ENCODE measurements at regions of chr9 and their contacts with region 1.

Region 1: DNA sequence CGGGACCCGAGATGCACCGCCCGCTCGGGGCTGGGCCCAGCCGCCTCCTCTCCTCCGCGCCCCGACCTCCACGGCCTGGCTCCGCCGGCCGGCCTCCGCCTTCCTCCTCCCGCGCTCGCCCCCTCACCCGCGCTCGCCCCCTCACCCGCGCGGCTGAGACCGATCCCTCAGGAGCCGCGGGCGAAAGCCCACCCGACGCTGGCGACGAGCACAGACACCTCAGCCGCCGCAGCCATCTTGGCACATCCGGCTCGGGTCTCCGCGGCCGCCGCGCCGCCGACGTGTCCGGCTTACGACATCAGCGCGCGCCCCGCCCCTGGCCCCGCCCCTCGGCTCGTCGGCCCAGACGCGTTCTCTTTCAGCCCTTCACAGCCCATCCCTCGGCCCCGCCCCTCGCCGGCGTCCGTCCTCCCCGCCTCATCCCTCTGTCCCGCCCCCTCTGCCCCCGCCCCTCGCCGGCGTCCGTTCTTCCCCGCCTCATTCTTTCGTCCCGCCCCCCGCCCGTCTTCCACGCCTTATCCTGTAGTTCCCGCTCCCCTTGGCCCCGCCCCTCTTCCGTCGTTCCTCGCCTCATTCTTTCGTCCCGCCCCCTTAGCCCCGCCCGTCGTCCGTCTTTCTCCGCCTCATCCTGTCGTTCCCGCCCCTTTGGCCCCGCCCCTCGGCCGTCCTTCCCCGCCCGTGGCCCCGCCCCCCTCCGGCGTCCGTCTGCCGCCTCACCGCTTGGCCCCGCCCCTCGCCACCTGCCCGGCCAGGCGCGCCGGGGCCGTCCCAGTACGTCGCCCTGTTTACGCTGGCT is at the start of gene SEC16A:
- DNase-seq: peak; percentile 97
- H3K4me3 ChIP-seq: peak within 1 kb of the TSS; percentile 84
- H3K27ac ChIP-seq: peak within 1 kb of the TSS; percentile 99
- H3K27me3 ChIP-seq: peaks cover 15% of the 10 kb centered on the region
- CTCF ChIP-seq: no peak
- polyA plus RNA-seq, gene SEC16A: 23.2 and 30.7 TPM in 2 replicates

Region 2: DNA sequence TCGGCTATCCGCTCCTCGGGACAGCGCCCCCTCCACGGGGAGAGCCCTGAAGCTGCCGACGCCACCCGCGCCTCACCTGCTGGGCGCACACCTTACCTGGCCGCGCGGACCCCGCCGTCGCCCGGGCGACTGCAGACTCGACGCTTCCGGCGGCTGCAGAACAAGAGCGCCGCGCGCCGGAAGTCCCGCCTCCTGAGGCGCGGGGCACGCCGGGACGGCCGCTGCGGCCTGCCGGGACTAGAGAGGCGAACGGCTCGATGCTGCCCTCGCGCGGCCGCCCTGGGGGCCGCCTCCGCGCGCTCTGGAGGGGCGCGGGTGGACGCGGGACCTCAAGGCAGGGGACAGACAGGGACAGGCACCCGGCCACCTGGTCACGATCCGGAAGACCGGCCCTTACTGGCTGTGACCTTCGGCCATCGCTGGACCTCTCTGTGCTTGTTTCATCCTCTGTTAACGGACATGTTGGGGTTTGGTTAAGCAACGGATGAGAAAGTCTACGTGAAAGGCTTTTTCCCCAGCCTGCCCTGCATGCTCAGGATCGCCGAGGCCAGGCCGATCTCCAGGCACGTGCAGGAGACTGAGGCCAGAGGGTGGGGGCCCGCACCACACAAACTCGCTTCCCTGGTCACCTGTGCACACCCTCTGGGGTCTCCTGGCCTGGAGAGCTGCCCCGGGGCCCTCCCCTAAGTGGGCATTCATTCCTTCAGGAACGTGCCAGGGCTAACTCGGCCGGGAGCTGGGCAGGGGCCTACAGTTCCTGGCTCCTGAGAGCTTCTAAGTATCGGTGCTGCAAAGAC is 82.8 kb before region 1 on chr9 and contains the start of gene SNAPC4:
- CTCF ChIA-PET with region 1: no interaction called
- POLR2A ChIA-PET with region 1: no interaction called
- DNase-seq: peak; percentile 34
- H3K4me3 ChIP-seq: peak within 1 kb of the TSS; percentile 86
- H3K27ac ChIP-seq: peak within 1 kb of the TSS; percentile 57
- H3K27me3 ChIP-seq: no peaks in the 10 kb centered on the region
- CTCF ChIP-seq: peak; percentile 68
- polyA plus RNA-seq, gene SNAPC4: 2.2 and 2.4 TPM in 2 replicates

Region 3: DNA sequence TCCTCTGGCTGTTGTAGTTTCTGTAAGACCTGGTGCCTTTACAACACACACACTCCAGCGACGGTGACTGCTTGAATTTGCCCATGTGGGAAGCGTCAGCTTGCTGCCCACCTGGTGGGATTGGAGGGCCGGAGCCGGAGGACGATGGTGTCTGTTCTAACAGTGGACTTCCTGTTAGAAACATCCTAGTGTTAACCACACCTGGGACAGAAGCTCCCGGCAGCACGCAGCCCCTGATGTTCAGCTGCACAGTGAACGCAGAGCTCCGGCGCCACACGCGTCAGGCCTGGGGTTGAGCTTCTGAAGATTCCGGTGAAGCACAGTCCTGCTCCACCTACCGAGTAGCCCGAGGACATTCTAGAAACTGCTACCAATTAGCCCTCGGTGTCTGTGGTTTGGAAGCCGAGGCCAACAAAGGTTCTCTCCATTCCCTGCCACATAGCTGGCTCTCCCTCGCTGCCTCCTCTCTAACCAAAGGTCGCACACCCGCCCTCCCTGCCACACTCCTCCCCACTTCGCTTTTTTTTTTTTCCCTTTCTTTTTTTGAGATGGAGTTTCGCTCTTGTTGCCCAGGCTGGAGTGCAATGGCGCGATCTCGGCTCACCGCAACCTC is 58.1 kb before region 1 on chr9:
- CTCF ChIA-PET with region 1: no interaction called
- POLR2A ChIA-PET with region 1: no interaction called
- DNase-seq: no peak
- H3K4me3 ChIP-seq: no peak overlapping the region
- H3K27ac ChIP-seq: no peak overlapping the region
- H3K27me3 ChIP-seq: no peaks in the 10 kb centered on the region
- CTCF ChIP-seq: no peak

Region 4: GRCh38 chr9:136454026-136454796 is 28.8 kb before region 1 on chr9:
- CTCF ChIA-PET with region 1: no interaction called
- POLR2A ChIA-PET with region 1: no interaction called
- DNase-seq: no peak
- H3K4me3 ChIP-seq: no peak overlapping the region
- H3K27ac ChIP-seq: no peak overlapping the region
- H3K27me3 ChIP-seq: no peaks in the 10 kb centered on the region
- CTCF ChIP-seq: no peak

Region 5: DNA sequence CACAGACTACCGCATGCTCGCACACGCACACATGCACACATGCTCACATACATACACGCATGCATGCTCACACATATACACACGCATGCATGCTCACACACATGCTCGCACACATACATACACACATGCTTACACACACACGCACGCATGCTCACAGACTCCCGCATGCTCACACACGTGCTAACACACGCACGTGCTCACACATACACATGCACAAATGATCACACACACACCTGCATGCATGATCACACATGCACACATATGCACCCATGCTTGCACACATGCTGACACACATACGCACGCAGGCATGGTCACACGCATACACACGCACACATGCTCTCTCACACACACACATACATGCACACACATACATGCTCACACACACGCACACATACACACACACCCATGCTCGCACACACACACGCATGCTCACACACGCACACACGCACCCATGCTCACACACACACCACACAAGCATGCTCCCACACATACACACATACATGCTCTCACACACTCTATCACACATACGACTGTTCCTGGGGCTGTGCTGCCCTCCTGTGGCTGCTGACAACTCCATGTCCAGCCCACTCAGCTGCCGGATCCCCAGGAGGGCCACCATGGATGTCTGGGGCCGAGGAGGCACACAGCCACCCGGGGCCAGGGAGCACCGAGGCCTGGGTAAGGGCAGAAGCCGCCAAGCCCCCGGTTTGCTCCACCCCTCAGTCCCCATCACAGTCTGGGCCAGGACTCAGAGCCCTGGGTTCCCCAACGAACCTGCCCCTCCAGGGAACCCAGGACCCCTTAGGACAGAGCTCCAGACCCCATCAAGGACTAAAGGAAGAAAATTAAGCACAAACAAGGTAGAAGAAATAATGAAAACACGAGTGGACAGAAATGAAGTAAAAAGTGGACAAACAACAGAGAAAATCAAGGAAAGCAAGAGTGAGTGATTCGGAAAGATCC is 148.3 kb after region 1 on chr9:
- CTCF ChIA-PET with region 1: interaction called, 183 read pairs
- POLR2A ChIA-PET with region 1: interaction called, 7 read pairs
- DNase-seq: peak; percentile 59
- H3K4me3 ChIP-seq: no peak overlapping the region
- H3K27ac ChIP-seq: no peak overlapping the region
- H3K27me3 ChIP-seq: peaks cover 14% of the 10 kb centered on the region
- CTCF ChIP-seq: peak; percentile 93

Region 6: DNA sequence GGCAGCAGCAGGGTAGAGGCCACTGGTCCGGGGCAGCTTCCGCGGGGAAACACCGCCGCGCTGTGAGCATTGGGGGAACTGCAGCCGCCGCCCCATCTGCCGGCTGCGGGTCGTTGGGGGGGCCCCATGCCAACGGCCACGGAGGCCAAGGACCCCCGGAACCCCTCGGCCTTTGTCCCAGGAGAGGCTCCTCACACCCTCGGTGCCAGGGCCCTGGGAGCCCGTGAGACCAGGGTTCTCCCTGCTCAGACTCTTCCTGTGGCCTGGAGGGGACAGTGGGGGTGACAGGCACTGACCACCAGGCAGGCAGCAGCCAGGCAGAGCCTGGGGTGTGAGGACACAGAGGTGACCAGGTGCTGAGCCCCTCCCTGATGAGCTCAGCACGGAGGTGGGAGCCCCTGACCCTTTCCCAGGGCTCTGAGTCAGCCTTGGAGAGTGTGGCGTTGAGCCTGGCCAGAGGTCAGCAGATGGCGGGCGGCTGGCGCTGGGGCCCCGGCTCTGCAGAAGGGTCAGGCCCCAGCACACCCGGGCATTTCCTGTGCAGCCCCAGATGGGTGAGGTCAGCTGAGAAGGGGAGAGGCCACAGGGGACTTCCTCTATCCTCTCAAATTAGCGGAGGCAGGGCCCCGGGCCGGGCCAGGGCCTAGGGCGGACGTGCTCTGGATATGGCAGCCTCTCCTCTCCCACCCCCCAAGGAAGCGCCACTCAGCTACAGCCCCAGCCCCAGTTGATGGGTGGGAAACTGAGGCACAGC is 161.8 kb after region 1 on chr9:
- CTCF ChIA-PET with region 1: interaction called, 55 read pairs
- POLR2A ChIA-PET with region 1: interaction called, 3 read pairs
- DNase-seq: no peak
- H3K4me3 ChIP-seq: no peak overlapping the region
- H3K27ac ChIP-seq: no peak overlapping the region
- H3K27me3 ChIP-seq: peaks cover 32% of the 10 kb centered on the region
- CTCF ChIP-seq: peak; percentile 75